ENCODE measurements at regions of chr17 and their contacts with region 1.

Region 1: DNA sequence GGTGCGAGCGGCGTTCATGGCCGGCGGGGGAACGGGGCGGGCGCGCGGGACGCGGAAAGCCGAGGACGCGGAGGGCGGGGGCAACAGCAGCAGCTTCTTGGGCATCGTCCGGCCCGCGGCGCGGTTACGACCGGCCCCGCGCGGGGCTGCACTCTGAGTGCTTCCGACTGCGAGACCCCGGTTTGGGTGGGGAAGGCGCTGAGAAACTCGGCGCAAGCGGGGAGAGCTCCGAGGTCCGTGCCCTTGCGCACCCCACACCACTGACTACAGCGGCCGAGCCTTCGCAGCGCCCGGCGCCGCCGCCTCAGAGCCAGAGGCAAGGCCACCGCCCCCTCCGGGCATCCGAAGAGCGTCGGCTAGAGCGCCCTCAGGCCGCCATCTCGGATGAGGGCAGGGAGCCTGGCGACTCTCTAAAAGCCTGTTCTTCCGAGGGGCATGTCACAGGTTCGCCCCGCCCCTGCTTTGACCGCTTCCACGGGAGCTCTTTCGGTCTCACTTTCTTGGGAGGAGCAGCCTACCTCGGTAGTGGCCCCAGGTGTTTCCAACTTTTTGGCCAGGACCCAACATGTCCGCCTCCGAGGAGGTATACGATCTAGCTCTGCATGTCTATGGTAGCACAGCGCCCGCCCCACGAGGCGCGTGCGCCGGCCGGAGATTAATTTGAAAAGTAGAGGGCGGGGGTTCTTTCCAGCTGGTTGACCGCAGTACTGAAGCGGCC is at the start of gene PRPSAP1:
- DNase-seq: peak; percentile 97
- ATAC-seq: peak; percentile 90
- H3K4me3 ChIP-seq: peak within 1 kb of the TSS; percentile 92
- H3K27ac ChIP-seq: peak within 1 kb of the TSS; percentile 81
- H3K4me1 ChIP-seq: peaks cover 24% of the 10 kb centered on the region
- H3K27me3 ChIP-seq: no peaks in the 10 kb centered on the region
- CTCF ChIP-seq: no peak
- total RNA-seq, gene PRPSAP1: 43.9 and 47.8 TPM in 2 replicates

Region 2: DNA sequence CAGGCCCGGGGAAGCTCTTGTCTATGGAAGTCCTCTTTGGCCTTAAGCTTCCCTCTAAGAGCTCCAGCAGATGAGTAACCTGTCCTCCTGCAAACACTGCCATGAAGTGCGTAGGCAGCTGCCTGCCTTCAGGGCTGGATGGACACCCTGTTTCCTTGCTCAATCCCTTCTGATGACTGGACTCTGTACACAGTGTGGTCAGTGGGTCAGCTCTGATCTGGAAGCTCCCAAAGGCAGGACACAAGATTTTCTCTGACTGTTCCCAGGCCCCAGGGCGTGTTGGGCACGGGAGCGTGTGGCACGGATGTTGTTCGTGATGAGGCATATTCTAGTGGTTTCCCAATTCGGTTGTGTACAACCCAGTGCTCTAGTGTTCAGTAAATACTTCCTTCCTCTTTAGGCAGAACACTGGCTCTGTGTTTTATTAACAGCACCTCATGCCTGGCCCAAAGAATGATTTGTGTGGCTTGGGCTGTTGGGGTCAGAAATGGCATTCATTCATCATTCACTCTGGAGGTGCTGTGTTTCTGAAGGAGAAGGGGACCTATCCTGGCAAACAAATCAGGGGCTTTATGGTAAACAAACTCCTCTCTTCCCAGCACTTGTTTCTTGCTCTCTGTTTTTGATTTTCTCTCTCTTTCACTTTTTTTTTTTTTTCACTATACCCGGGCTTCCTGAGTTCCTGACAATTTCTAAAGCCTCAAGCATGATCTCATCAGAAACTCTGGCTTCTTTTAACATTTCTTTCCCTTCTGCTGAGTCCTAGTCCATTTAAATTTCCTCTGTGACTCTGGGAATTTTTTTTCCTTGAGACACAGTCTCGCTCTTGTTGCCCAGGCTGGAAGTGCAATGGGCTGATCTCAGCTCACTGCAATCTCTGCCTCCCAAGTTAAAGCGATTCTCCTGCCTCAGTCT is 101.5 kb before region 1 on chr17:
- CTCF ChIA-PET with region 1: no interaction called
- POLR2A ChIA-PET with region 1: interaction called, 12 read pairs
- intact Hi-C with region 1: no loop called
- DNase-seq: peak; percentile 100
- ATAC-seq: peak; percentile 98
- H3K4me3 ChIP-seq: peak overlapping the region; percentile 35; the same call in 1 of the 2 replicates
- H3K27ac ChIP-seq: peak overlapping the region; percentile 93
- H3K4me1 ChIP-seq: peaks cover 25% of the 10 kb centered on the region
- H3K27me3 ChIP-seq: no peaks in the 10 kb centered on the region
- CTCF ChIP-seq: no peak

Region 3: DNA sequence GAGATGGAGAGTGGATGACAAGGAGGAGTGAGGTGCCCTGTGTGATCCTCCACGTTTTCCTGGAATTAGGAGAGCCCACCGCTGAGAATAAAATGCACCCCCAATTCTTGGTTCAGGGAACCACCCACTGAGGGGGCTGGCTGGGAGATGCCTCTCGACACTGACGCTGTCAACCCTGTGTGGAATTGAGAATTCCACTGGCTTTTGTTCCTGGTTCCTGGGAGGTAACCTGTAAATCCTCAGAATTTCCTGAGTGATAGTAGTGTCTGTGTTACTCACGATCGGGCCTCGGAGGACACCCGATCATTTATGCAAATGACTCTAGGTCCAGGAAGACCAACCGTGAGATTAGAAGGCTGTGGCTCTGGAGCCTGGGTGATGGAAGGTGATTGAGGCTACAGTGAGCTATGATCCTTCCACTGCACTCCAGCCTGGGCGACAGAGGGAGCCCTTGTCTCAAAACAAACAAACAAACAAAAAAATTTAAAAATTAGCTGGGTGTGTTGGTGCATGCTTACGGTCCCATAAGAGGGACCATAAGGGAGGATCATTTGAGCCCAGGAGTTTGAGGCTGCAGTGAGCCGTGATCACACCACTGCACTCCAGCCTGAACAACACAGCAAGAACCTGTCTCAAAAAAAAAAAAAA is 11.6 kb after region 1 on chr17:
- CTCF ChIA-PET with region 1: interaction called, 19 read pairs
- POLR2A ChIA-PET with region 1: interaction called, 15 read pairs
- intact Hi-C with region 1: loop called (anchors 2 kb)
- DNase-seq: peak; percentile 59
- ATAC-seq: peak; percentile 80
- H3K4me3 ChIP-seq: no peak overlapping the region
- H3K27ac ChIP-seq: no peak overlapping the region
- H3K4me1 ChIP-seq: peaks cover 6% of the 10 kb centered on the region
- H3K27me3 ChIP-seq: no peaks in the 10 kb centered on the region
- CTCF ChIP-seq: peak; percentile 84

Region 4: GRCh38 chr17:76370261-76370993 is 16.7 kb after region 1 on chr17:
- CTCF ChIA-PET with region 1: interaction called, 19 read pairs
- POLR2A ChIA-PET with region 1: interaction called, 15 read pairs
- intact Hi-C with region 1: loop called (anchors 2 kb)
- DNase-seq: peak; percentile 99
- ATAC-seq: peak; percentile 97
- H3K4me3 ChIP-seq: peak overlapping the region; percentile 8; the same call in 1 of the 2 replicates
- H3K27ac ChIP-seq: peak overlapping the region; percentile 80
- H3K4me1 ChIP-seq: peaks cover 28% of the 10 kb centered on the region
- H3K27me3 ChIP-seq: no peaks in the 10 kb centered on the region
- CTCF ChIP-seq: peak; percentile 100

Region 5: DNA sequence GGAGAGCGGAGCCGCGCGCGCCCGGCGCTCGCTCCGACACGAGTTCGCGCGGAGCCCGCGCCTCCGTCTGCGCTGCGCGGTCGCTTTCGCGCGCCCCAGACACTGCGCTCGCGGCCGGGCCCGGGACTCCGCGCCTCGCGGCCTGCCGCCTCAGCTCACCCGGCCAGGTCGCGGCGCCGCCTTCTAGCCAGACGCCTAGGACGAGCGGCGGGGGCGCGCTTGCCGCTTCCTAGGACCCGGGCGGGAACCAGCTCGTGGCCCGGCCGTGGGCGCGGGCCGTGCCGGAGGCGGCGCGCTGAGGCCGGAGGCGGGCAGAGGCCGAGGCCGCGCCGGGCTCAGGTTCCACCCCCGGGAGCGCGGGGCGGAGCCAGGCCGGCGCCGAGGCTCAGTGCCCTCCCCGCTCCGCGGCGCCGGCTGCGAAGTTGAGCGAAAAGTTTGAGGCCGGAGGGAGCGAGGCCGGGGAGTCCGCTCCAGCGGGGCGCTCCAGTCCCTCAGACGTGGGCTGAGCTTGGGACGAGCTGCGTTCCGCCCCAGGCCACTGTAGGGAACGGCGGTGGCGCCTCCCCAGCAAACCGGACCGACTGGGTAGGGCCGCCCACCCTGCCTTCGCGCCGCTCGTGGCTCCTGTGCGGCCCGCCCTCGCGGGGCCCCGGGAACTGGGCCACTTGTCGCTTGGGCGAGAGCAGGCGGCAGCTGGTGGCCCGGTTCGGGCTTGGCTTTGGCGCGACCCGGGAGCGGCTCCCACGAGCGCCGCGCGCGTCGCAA is 30.6 kb after region 1 on chr17 and contains the start of gene SPHK1:
- CTCF ChIA-PET with region 1: interaction called, 9 read pairs
- POLR2A ChIA-PET with region 1: interaction called, 10 read pairs
- intact Hi-C with region 1: loop called (anchors 5 kb)
- DNase-seq: peak; percentile 89
- ATAC-seq: peak; percentile 68
- H3K4me3 ChIP-seq: peak within 1 kb of the TSS; percentile 73
- H3K27ac ChIP-seq: peak within 1 kb of the TSS; percentile 60
- H3K4me1 ChIP-seq: peaks cover 21% of the 10 kb centered on the region
- H3K27me3 ChIP-seq: no peaks in the 10 kb centered on the region
- CTCF ChIP-seq: no peak
- total RNA-seq, gene SPHK1: 54.2 and 59.7 TPM in 2 replicates

Region 6: GRCh38 chr17:76585818-76586593 is 232.2 kb after region 1 on chr17 and contains the start of gene ST6GALNAC2:
- CTCF ChIA-PET with region 1: no interaction called
- POLR2A ChIA-PET with region 1: interaction called, 10 read pairs
- intact Hi-C with region 1: no loop called
- DNase-seq: peak; percentile 84
- ATAC-seq: peak; percentile 94
- H3K4me3 ChIP-seq: peak within 1 kb of the TSS; percentile 80
- H3K27ac ChIP-seq: no peak within 1 kb of the TSS
- H3K4me1 ChIP-seq: 0 out of 2 replicates have a peak, but pooled peaks cover 4% of the 10 kb centered on the region
- H3K27me3 ChIP-seq: no peaks in the 10 kb centered on the region
- CTCF ChIP-seq: peak; percentile 60
- total RNA-seq, gene ST6GALNAC2: 1.0 and 6.4 TPM in 2 replicates

Measured in PC-3 (cell line).